Colonic mucosa (tissue), 4 donors: ENCODE measurements at regions of chr6 and their contacts with region 1.

Region 1: DNA sequence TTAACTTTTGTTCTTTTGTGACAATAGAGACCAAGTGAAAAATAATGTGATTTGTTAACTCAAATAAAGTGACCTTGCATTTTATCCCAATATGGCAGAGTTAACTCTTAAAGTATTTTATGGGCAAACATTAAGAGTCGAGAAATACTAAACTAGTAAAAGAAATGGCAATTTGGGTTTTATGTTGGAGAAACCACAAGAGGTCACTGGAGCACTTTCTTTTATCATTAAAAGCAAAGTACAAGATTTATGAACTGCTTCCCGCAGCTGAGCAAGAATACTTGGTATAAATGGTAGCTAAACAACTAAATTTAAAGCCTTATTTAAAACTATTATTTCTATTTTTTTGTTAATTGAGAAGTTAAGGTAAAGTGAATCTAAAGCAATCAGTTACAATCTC is 33.5 kb upstream of the MCM9 start:
- DNase-seq: no peak
- H3K4me3 ChIP-seq: no peak overlapping the region
- H3K27ac ChIP-seq: no peak overlapping the region
- H3K4me1 ChIP-seq: no peaks in the 10 kb centered on the region
- H3K27me3 ChIP-seq: no peaks in the 10 kb centered on the region
- CTCF ChIP-seq: no peak

Region 2: GRCh38 chr6:118207947-118208346 is 760.5 kb before region 1 on chr6:
- intact Hi-C with region 1: no loop called
- DNase-seq: no peak
- H3K4me3 ChIP-seq: no peak overlapping the region
- H3K27ac ChIP-seq: no peak overlapping the region
- H3K4me1 ChIP-seq: no peaks in the 10 kb centered on the region
- H3K27me3 ChIP-seq: no peaks in the 10 kb centered on the region
- CTCF ChIP-seq: no peak

Region 3: GRCh38 chr6:118843685-118844390 is 124.6 kb before region 1 on chr6:
- intact Hi-C with region 1: no loop called
- DNase-seq: no peak
- H3K4me3 ChIP-seq: no peak overlapping the region
- H3K27ac ChIP-seq: no peak overlapping the region
- H3K4me1 ChIP-seq: no peaks in the 10 kb centered on the region
- H3K27me3 ChIP-seq: no peaks in the 10 kb centered on the region
- CTCF ChIP-seq: no peak

Region 4: DNA sequence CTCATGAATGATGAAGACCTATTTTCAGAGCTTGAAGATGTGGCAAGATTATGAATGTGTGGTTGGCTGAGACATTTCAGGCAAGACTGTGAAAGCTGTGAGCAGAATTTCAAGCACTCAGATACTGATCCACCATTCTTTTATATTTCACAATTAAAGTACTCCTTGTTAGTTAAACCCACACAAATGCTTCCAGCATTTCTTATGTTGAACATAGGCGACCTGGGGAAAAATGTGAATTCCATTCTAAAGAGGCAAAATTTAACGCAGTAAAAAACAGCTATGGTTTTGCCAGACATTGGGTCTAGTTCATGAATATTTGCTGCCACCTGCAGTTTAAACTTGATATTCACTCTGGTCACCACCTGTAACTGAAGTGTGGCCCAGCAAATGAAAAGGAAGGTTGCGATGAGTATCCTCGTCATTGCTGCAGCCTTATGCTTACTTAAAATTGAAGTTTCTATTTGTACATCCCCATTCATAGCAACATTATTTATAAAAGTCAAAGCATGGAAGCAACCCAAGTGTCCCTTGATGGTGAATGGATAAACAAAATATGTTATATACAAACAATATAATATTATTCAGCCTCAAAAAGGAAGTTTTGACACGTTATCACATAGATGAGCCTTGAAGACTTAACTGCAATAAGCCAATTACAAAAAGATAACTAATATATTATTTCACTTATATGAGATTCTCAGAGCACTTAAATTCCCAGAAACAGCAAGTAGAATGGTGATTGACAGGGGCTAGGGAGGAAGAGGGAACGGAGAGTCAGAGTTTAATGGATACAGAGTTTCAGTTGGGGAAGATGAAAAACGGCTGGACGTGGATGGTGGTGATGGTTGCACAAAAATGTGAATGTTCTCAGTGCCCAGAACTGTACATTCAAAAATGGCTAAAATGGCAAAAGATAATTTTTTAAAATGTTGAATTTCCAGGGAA is 142.5 kb after region 1 on chr6:
- intact Hi-C with region 1: loop called (anchors 2 kb)
- DNase-seq: peak; percentile 48
- H3K4me3 ChIP-seq: no peak overlapping the region
- H3K27ac ChIP-seq: no peak overlapping the region
- H3K4me1 ChIP-seq: no peaks in the 10 kb centered on the region
- H3K27me3 ChIP-seq: no peaks in the 10 kb centered on the region
- CTCF ChIP-seq: peak; percentile 49